B cell (primary cell): ENCODE measurements at regions of chr21 and their contacts with region 1.

Region 1: DNA sequence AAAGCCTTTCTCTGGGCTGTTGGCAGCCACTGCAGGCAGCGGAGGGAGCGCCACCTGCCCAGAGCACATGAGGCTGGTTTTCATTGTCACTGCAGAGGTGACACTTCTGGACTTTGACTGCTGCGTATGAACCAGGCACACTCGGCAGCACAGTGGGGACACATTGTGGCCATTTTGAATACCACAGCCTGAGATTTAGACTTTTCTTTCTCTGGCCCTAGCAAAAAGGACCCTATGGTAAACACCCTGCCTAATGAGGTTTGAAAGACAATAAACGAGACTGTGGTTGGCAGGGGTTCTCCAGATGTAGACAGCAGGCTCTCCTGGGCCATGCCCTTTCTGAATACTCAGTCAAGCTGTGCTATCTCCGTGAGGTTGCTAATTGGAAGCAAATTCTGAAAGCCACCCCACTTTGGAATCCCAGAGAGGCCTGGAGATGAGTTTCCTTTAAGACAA is 12.0 kb upstream of the KCNE2 start:
- DNase-seq: peak; percentile 55
- ATAC-seq: peak; percentile 78
- H3K4me3 ChIP-seq: no peak overlapping the region
- H3K4me3 Mint-ChIP-seq: no peak overlapping the region
- H3K27ac ChIP-seq: no peak overlapping the region
- H3K27ac Mint-ChIP-seq: no peak overlapping the region
- H3K4me1 ChIP-seq: no peaks in the 10 kb centered on the region
- H3K4me1 Mint-ChIP-seq: peaks cover 4% of the 10 kb centered on the region
- H3K27me3 ChIP-seq: no peaks in the 10 kb centered on the region
- H3K27me3 Mint-ChIP-seq: peaks cover 26% of the 10 kb centered on the region
- CTCF ChIP-seq: peak; percentile 58

Region 2: GRCh38 chr21:33915368-33916199 is 436.2 kb before region 1 on chr21 and contains the start of gene ATP5PO:
- CTCF ChIA-PET with region 1: interaction called, 632 read pairs
- POLR2A ChIA-PET with region 1: no interaction called
- intact Hi-C with region 1: no loop called
- DNase-seq: peak; percentile 97
- ATAC-seq: peak; percentile 100
- H3K4me3 ChIP-seq: peak within 1 kb of the TSS; percentile 62 to 99 (median 85)
- H3K4me3 Mint-ChIP-seq: peak within 1 kb of the TSS; percentile 98
- H3K27ac ChIP-seq: peak within 1 kb of the TSS; percentile 49 to 86
- H3K27ac Mint-ChIP-seq: peak within 1 kb of the TSS; percentile 94
- H3K4me1 ChIP-seq: peaks cover 14 to 16% of the 10 kb centered on the region in 2 donors
- H3K4me1 Mint-ChIP-seq: peaks cover 27% of the 10 kb centered on the region
- H3K27me3 ChIP-seq: no peaks in the 10 kb centered on the region
- H3K27me3 Mint-ChIP-seq: no peaks in the 10 kb centered on the region
- CTCF ChIP-seq: no peak
- total RNA-seq, gene ATP5PO: 123 and 124 TPM in 2 replicates

Region 3: GRCh38 chr21:33947451-33948095 is 404.2 kb before region 1 on chr21:
- CTCF ChIA-PET with region 1: interaction called, 12 read pairs
- POLR2A ChIA-PET with region 1: no interaction called
- intact Hi-C with region 1: no loop called
- DNase-seq: peak; percentile 48
- ATAC-seq: peak; percentile 67
- H3K4me3 ChIP-seq: no peak overlapping the region
- H3K4me3 Mint-ChIP-seq: peak overlapping the region; percentile 64
- H3K27ac ChIP-seq: peak overlapping the region; percentile 74 to 83
- H3K27ac Mint-ChIP-seq: peak overlapping the region; percentile 95
- H3K4me1 ChIP-seq: peaks cover 31 to 42% of the 10 kb centered on the region in 2 donors
- H3K4me1 Mint-ChIP-seq: peaks cover 50% of the 10 kb centered on the region
- H3K27me3 ChIP-seq: no peaks in the 10 kb centered on the region
- H3K27me3 Mint-ChIP-seq: no peaks in the 10 kb centered on the region
- CTCF ChIP-seq: no peak

Region 4: DNA sequence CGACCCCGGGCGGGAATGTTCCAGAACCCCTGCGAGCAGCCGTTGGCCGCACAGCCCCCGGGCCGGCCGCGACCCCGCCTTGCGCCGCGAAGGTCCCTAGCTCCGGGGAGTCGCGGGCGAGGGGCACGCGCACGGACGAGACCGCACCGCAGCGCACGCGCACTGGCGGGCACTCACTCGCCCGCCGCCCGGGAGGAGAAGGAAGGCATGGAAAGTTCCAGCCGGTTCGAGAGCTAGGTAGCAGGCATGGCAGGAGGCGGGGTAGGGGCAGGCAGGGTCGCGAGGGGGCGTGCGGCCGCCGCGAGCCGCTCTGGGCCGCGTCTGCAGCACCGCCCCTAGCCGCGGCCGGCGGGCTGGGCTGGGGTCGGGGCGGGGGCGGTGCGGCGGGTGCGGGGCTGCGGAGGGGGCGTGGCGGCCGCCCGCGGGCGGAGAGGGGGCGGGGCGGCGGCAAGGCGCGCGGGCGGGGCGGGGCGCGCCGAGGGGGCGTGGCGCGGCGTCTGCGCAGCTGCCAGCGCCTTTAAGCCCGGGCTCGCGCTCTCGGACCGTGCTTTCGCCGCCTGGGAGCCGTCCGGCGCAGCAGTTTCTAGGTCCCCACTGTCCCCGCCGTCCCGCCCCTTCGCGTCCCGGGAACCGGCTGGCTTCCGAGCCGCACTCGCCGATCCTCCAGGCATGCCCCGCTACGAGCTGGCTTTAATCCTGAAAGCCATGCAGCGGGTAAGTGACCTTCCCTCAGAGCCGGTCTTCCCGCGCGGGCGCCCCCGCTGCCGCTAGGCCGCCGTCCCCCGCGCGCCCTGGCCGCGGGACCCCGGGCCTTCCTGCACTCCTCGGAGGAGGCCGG is 278.6 kb before region 1 on chr21 and contains the starts of genes MRPS6 and SLC5A3:
- CTCF ChIA-PET with region 1: interaction called, 13 read pairs
- POLR2A ChIA-PET with region 1: interaction called, 3 read pairs
- intact Hi-C with region 1: loop called (anchors 1 kb)
- DNase-seq: peak; percentile 88
- ATAC-seq: peak; percentile 78
- H3K4me3 ChIP-seq: peak within 1 kb of the TSS; percentile 60 to 92 (median 79)
- H3K4me3 Mint-ChIP-seq: peak within 1 kb of the TSS; percentile 92
- H3K27ac ChIP-seq: peak within 1 kb of the TSS; percentile 51 to 69
- H3K27ac Mint-ChIP-seq: peak within 1 kb of the TSS; percentile 91
- H3K4me1 ChIP-seq: peaks cover 13 to 20% of the 10 kb centered on the region in 2 donors
- H3K4me1 Mint-ChIP-seq: peaks cover 45% of the 10 kb centered on the region
- H3K27me3 ChIP-seq: no peaks in the 10 kb centered on the region
- H3K27me3 Mint-ChIP-seq: no peaks in the 10 kb centered on the region
- CTCF ChIP-seq: no peak
- total RNA-seq, gene MRPS6: 36.5 and 37.9 TPM in 2 replicates
- total RNA-seq, gene SLC5A3: 16.7 and 18.0 TPM in 2 replicates

Region 5: DNA sequence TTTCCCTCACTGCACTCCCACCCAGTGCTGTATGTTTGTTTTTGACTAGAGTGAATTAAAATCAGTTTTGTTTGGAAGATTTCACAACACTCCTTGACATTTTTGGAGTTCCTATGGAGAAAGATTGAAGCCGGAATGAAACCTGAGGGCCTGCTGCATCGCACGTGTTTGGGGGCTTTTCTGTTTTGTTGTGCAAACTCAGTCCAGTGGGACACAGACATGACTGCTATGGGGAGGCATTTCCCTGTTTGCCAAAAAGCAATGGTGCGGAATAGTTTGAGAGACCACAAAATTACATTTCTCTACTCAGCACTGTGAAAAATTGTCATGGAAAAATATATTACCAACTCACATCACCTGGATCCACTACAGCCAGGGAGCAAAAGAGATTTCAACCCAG is 31.8 kb before region 1 on chr21:
- CTCF ChIA-PET with region 1: no interaction called
- POLR2A ChIA-PET with region 1: no interaction called
- intact Hi-C with region 1: no loop called
- DNase-seq: no peak
- ATAC-seq: no peak
- H3K4me3 ChIP-seq: no peak overlapping the region
- H3K4me3 Mint-ChIP-seq: no peak overlapping the region
- H3K27ac ChIP-seq: no peak overlapping the region
- H3K27ac Mint-ChIP-seq: no peak overlapping the region
- H3K4me1 ChIP-seq: no peaks in the 10 kb centered on the region
- H3K4me1 Mint-ChIP-seq: no peaks in the 10 kb centered on the region
- H3K27me3 ChIP-seq: peaks cover 0 to 6% (median 2%) of the 10 kb centered on the region in 4 experiments
- H3K27me3 Mint-ChIP-seq: peaks cover 34% of the 10 kb centered on the region
- CTCF ChIP-seq: no peak

Region 6: DNA sequence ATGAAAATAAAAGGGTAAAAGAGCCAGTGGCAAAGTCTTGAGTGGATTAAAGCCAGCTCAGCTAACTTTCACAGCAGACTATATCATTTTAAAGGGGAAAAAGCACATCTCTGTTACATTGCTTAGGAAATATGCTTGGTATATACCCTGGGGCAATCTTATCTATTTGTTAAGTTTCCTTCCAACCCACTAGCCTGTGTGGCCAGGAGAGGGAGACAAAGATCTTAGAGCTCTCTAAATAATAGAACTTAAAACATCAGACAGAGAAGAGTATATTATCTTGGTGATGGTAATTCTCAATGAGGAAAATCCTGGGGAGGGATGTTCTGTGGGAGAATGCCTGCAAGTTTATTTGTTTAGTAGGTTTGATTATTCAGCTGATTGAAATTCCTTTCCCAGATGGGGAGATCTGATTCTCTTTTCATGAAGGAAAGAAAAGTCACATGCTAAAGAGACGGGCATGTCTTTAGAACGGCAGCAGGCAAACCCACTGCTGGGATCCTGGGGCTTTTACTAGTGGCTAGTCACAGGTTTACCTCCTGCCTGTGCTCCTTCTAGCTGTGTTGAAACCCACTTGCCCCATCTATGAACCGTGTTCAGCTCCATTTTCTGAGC is 15.6 kb after region 1 on chr21:
- CTCF ChIA-PET with region 1: interaction called, 24 read pairs
- POLR2A ChIA-PET with region 1: no interaction called
- intact Hi-C with region 1: no loop called
- DNase-seq: peak; percentile 58
- ATAC-seq: peak; percentile 70
- H3K4me3 ChIP-seq: no peak overlapping the region
- H3K4me3 Mint-ChIP-seq: no peak overlapping the region
- H3K27ac ChIP-seq: no peak overlapping the region
- H3K27ac Mint-ChIP-seq: no peak overlapping the region
- H3K4me1 ChIP-seq: no peaks in the 10 kb centered on the region
- H3K4me1 Mint-ChIP-seq: no peaks in the 10 kb centered on the region
- H3K27me3 ChIP-seq: peaks cover 0 to 3% (median 0%) of the 10 kb centered on the region in 4 experiments
- H3K27me3 Mint-ChIP-seq: peaks cover 20% of the 10 kb centered on the region
- CTCF ChIP-seq: peak; percentile 78